GM12878 (cell line): ENCODE measurements at regions of chr12 and their contacts with region 1.

Region 1: GRCh38 chr12:65300680-65301349 is 22.3 kb downstream of the MSRB3 start:
- DNase-seq: no peak
- ATAC-seq: peak; percentile 49
- H3K4me3 ChIP-seq: no peak overlapping the region
- H3K27ac ChIP-seq: no peak overlapping the region
- H3K4me1 ChIP-seq: no peaks in the 10 kb centered on the region
- H3K27me3 ChIP-seq: no peaks in the 10 kb centered on the region; a peak in 1 of 4 replicates
- CTCF ChIP-seq: 0 out of 6 replicates have a peak, but pooled peaks of 1 of the 3 experiments have one; percentile 22
- EP300 ChIP-seq: no peak
- POLR2A ChIP-seq: no peak
- RAD21 ChIP-seq: no peak

Region 2: DNA sequence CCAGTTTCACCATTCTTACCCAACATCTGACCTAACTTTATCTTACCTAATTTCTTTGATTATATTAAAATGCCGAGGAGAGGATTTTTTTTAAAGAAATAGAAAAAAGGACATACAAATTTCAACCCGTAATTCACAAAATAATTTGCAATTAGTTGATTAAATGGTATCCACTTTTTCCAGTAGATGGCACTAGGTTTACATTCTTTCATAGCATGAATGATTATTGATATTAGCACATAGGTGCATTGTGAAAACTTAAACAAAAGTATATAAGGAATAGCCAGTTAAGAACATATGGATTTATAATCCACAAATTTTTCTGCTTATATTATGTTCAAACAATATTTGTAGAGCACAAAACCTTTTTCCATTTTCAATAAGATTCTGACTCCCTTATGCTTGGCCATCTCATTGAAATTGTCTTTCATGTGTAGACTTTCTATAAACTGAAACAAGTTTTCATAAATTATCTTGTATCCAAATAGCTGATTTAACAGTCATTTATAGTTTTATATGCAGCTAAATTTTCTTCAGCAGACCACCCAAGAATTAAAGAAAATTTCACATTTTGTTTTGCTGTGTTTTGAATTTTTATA is 13.0 kb after region 1 on chr12:
- CTCF ChIA-PET with region 1: interaction called, 19 read pairs
- POLR2A ChIA-PET with region 1: no interaction called
- RAD21 ChIA-PET with region 1: no interaction called
- SMC1A ChIA-PET with region 1: interaction called, 6 read pairs
- in situ Hi-C with region 1: no loop called
- intact Hi-C with region 1: no loop called
- DNase-seq: no peak
- ATAC-seq: no peak
- H3K4me3 ChIP-seq: no peak overlapping the region
- H3K27ac ChIP-seq: no peak overlapping the region
- H3K4me1 ChIP-seq: no peaks in the 10 kb centered on the region
- H3K27me3 ChIP-seq: no peaks in the 10 kb centered on the region
- CTCF ChIP-seq: peak in 2 of 3 experiments; percentile 20 to 32; a peak in 3 of 6 replicates
- EP300 ChIP-seq: no peak
- POLR2A ChIP-seq: no peak
- RAD21 ChIP-seq: peak; percentile 62

Region 3: DNA sequence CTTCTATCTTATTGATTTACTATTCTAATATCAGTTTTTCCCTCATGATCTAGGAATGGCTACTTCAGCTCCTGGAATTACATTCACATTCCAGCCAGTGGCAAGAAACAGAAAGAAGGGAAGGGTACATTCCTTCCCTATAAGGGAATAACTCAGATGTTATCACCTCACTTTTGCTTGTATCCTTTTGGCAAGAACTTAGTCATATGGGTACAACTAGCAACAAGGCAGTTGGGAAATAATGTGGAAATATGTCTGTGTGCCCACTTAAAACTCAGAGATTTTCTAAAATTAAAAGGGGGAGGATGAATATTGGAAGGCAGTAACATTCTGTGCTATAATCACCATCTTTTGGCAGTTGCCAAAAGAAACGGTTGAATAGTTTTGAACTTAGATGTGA is 63.2 kb after region 1 on chr12:
- CTCF ChIA-PET with region 1: no interaction called
- POLR2A ChIA-PET with region 1: no interaction called
- RAD21 ChIA-PET with region 1: no interaction called
- SMC1A ChIA-PET with region 1: no interaction called
- in situ Hi-C with region 1: no loop called
- intact Hi-C with region 1: no loop called
- DNase-seq: no peak
- ATAC-seq: no peak
- H3K4me3 ChIP-seq: no peak overlapping the region
- H3K27ac ChIP-seq: no peak overlapping the region
- H3K4me1 ChIP-seq: no peaks in the 10 kb centered on the region
- H3K27me3 ChIP-seq: no peaks in the 10 kb centered on the region
- CTCF ChIP-seq: no peak
- EP300 ChIP-seq: no peak
- POLR2A ChIP-seq: no peak
- RAD21 ChIP-seq: no peak